Motor neuron (in vitro differentiated cells): ENCODE measurements at regions of chr11 and their contacts with region 1.

Region 1: DNA sequence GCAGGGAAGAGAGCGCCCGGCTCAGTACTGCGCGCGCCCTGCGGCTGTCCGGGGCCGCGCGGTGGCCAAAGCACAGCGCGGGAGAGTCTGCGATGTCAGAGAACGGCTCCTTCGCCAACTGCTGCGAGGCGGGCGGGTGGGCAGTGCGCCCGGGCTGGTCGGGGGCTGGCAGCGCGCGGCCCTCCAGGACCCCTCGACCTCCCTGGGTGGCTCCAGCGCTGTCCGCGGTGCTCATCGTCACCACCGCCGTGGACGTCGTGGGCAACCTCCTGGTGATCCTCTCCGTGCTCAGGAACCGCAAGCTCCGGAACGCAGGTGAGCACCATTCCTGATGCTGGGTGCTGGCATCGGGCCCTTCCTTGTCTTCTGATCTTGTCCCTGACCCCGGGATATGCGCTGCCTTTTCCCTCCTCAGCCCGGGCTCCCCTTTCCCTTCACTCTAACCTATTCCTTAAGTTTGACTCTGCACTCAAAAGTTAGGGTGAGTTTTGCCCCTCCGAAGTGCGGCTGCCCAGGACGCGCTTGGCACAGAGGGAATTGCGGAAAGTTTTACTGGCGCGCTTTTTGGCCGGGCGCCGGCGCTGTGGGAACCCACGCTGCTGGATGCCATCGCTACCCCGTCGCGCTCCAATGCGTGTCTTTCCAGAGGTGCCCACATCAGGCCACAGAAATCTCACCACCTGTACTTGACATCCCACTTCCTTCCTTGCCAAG is at the start of gene MTNR1B:
- ATAC-seq: peak in 6 of 8 experiments; percentile 41 to 88 (median 78)
- H3K4me3 ChIP-seq: peak within 1 kb of the TSS; percentile 23 to 35 (median 30)
- H3K27ac ChIP-seq: no peak within 1 kb of the TSS
- H3K4me1 ChIP-seq: peaks cover 0 to 10% of the 10 kb centered on the region in 2 donors
- total RNA-seq, gene MTNR1B: 0.11 to 1.00 (median 0.23) TPM in 5 of 8 experiments, not detected in the others

Region 2: GRCh38 chr11:92758241-92758780 is 211.5 kb before region 1 on chr11:
- in situ Hi-C with region 1: no loop called
- ATAC-seq: no peak
- H3K4me3 ChIP-seq: no peak overlapping the region
- H3K27ac ChIP-seq: no peak overlapping the region
- H3K4me1 ChIP-seq: peaks cover 11 to 17% of the 10 kb centered on the region in 2 donors

Region 3: GRCh38 chr11:92880381-92880780 is 89.4 kb before region 1 on chr11:
- in situ Hi-C with region 1: no loop called
- ATAC-seq: no peak
- H3K4me3 ChIP-seq: no peak overlapping the region
- H3K27ac ChIP-seq: no peak overlapping the region
- H3K4me1 ChIP-seq: peaks cover 0 to 5% of the 10 kb centered on the region in 2 donors

Region 4: GRCh38 chr11:93089474-93090102 is 119.8 kb after region 1 on chr11:
- in situ Hi-C with region 1: loop called in 1 of 9 experiments (anchors 25 kb)
- ATAC-seq: peak in 7 of 8 experiments; percentile 17 to 100 (median 65)
- H3K4me3 ChIP-seq: no peak overlapping the region
- H3K27ac ChIP-seq: no peak overlapping the region
- H3K4me1 ChIP-seq: peaks cover 1 to 8% of the 10 kb centered on the region in 2 donors

Region 5: GRCh38 chr11:93166862-93167261 is 197.1 kb after region 1 on chr11:
- in situ Hi-C with region 1: no loop called
- ATAC-seq: no peak
- H3K4me3 ChIP-seq: no peak overlapping the region
- H3K27ac ChIP-seq: no peak overlapping the region
- H3K4me1 ChIP-seq: no peaks in the 10 kb centered on the region

Region 6: GRCh38 chr11:93520726-93521509 is 551.1 kb after region 1 on chr11:
- in situ Hi-C with region 1: no loop called
- ATAC-seq: no peak
- H3K4me3 ChIP-seq: no peak overlapping the region
- H3K27ac ChIP-seq: no peak overlapping the region
- H3K4me1 ChIP-seq: no peaks in the 10 kb centered on the region